ENCODE measurements at regions of chr6 and their contacts with region 1.

Region 1: DNA sequence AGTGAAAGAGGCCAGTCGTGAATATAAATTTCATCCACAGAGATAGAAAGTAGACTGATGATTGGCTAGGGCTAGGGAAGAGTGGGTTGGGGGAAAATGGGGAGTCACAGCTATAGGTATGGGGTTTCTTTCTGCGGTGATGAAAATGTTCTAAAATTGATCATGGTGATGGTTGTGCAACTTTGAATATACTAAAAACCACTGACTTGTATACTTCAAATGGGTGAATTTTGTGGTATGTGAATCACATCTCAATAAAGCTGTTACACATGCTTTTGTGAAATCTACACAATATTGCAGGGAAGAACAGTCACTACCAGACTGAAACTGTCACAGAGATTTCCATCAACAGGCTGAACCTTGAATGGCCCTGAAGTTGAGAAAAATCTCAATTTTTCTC is 61.5 kb downstream of the LYRM4 start:
- DNase-seq: no peak
- H3K4me3 Mint-ChIP-seq: no peak overlapping the region
- H3K27ac Mint-ChIP-seq: peak overlapping the region; percentile 14
- H3K4me1 Mint-ChIP-seq: peaks cover 5% of the 10 kb centered on the region
- H3K27me3 Mint-ChIP-seq: no peaks in the 10 kb centered on the region

Region 2: GRCh38 chr6:5174244-5174643 is 25.0 kb before region 1 on chr6:
- intact Hi-C with region 1: loop called (anchors 1 kb)
- DNase-seq: peak; percentile 91
- H3K4me3 Mint-ChIP-seq: peak overlapping the region; percentile 70
- H3K27ac Mint-ChIP-seq: peak overlapping the region; percentile 82
- H3K4me1 Mint-ChIP-seq: peaks cover 38% of the 10 kb centered on the region
- H3K27me3 Mint-ChIP-seq: no peaks in the 10 kb centered on the region

Measured in activated CD4-positive, alpha-beta T cell treated with anti-CD3 and anti-CD28 coated beads, Interleukin-2, amount 10 ng/mL, durations not matched to agents 24 days and 14 days (primary cell).